IMR-90 (cell line): ENCODE measurements at regions of chr6 and their contacts with region 1.

Region 1: DNA sequence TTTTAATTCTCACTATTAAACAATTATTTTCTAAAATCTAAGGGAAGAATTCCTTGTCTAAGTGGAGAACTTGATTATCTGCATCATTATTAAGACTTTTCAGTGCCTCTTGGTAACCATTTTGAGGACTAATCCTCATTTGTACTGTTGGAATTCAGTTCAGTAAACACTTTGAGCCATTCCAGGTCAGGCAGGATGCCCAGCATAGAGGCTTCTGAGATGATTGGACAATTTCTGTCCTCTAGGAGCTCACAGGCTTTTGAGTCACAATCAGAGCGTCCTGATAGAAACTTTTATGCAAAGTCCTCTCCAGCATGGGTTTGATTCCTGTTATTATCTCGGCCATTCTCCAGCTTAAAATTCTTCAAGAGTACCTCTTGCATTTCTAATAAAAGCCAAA is 1304.6 kb downstream of the EPHA7 start:
- DNase-seq: no peak
- ATAC-seq: peak; percentile 49; the same call in 1 of the 2 replicates
- H3K4me3 ChIP-seq: no peak overlapping the region
- H3K27ac ChIP-seq: no peak overlapping the region
- H3K4me1 ChIP-seq: no peaks in the 10 kb centered on the region
- H3K27me3 ChIP-seq: no peaks in the 10 kb centered on the region
- CTCF ChIP-seq: no peak
- POLR2A ChIP-seq: no peak
- RAD21 ChIP-seq: no peak

Region 2: GRCh38 chr6:90719321-90720195 is 1395.2 kb before region 1 on chr6:
- CTCF ChIA-PET with region 1: no interaction called
- POLR2A ChIA-PET with region 1: no interaction called
- dilution Hi-C with region 1: no loop called
- in situ Hi-C with region 1: no loop called
- intact Hi-C with region 1: no loop called
- DNase-seq: no peak
- ATAC-seq: no peak
- H3K4me3 ChIP-seq: no peak overlapping the region
- H3K27ac ChIP-seq: no peak overlapping the region
- H3K4me1 ChIP-seq: no peaks in the 10 kb centered on the region
- H3K27me3 ChIP-seq: no peaks in the 10 kb centered on the region
- CTCF ChIP-seq: no peak
- POLR2A ChIP-seq: no peak
- RAD21 ChIP-seq: no peak

Region 3: GRCh38 chr6:91465393-91465792 is 649.4 kb before region 1 on chr6:
- CTCF ChIA-PET with region 1: no interaction called
- POLR2A ChIA-PET with region 1: no interaction called
- dilution Hi-C with region 1: no loop called
- in situ Hi-C with region 1: no loop called
- intact Hi-C with region 1: loop called (anchors 5 kb)
- DNase-seq: no peak
- ATAC-seq: peak; percentile 18; the same call in 1 of the 2 replicates
- H3K4me3 ChIP-seq: no peak overlapping the region
- H3K27ac ChIP-seq: peak overlapping the region; percentile 6; the same call in 1 of the 2 replicates
- H3K4me1 ChIP-seq: peaks cover 2% of the 10 kb centered on the region
- H3K27me3 ChIP-seq: no peaks in the 10 kb centered on the region
- CTCF ChIP-seq: no peak
- POLR2A ChIP-seq: no peak
- RAD21 ChIP-seq: no peak

Region 4: DNA sequence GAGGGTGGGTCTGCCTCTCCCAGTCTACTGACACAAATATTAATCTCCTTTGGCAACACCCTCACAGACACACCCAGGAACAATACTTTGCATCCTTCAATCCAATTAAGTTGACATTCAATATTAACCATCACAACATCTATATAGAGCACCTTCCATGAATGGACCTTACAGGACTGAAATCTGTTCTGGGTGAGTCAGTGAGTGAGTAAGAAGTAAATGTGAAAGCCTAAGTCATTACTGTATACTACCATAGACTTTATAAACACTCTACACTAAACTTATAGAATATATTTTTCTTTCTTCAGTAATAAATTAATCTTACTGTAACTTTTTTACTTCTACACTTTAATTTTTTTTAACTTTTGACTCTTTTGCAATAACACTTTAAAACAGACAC is 534.2 kb before region 1 on chr6:
- CTCF ChIA-PET with region 1: no interaction called
- POLR2A ChIA-PET with region 1: no interaction called
- dilution Hi-C with region 1: no loop called
- in situ Hi-C with region 1: no loop called
- intact Hi-C with region 1: no loop called
- DNase-seq: peak; percentile 46
- ATAC-seq: peak; percentile 94
- H3K4me3 ChIP-seq: no peak overlapping the region
- H3K27ac ChIP-seq: no peak overlapping the region
- H3K4me1 ChIP-seq: peaks cover 5% of the 10 kb centered on the region; the same call in 1 of the 2 replicates
- H3K27me3 ChIP-seq: no peaks in the 10 kb centered on the region
- CTCF ChIP-seq: no peak
- POLR2A ChIP-seq: no peak
- RAD21 ChIP-seq: no peak

Region 5: DNA sequence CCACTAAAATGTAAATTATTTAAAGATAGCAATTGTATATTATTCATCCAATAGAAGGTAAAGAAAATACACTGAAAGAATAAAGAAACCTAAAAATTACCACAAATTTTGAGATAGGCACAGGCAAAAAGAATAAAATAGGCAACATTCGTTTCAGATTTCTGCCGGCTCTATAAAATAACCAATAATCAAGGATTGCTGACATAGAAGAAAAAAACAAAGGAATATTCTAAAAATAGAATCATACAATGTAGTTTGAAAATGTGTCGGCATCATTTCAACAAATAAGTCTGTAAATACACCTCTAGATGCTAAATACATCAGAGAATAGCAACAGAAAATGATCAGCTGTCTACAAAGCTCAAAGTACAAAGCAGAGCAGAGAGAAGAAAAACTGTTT is 331.3 kb after region 1 on chr6:
- CTCF ChIA-PET with region 1: no interaction called
- POLR2A ChIA-PET with region 1: no interaction called
- dilution Hi-C with region 1: no loop called
- in situ Hi-C with region 1: no loop called
- intact Hi-C with region 1: no loop called
- DNase-seq: no peak
- ATAC-seq: no peak
- H3K4me3 ChIP-seq: no peak overlapping the region
- H3K27ac ChIP-seq: no peak overlapping the region
- H3K4me1 ChIP-seq: no peaks in the 10 kb centered on the region
- H3K27me3 ChIP-seq: no peaks in the 10 kb centered on the region
- CTCF ChIP-seq: no peak
- POLR2A ChIP-seq: no peak
- RAD21 ChIP-seq: no peak